ENCODE measurements at regions of chr18 and their contacts with region 1.

Region 1: GRCh38 chr18:71426441-71426840 is 1117.7 kb downstream of the CBLN2 start:
- DNase-seq: no peak
- ATAC-seq: no peak
- H3K4me3 ChIP-seq: no peak overlapping the region
- H3K27ac ChIP-seq: no peak overlapping the region
- H3K4me1 ChIP-seq: no peaks in the 10 kb centered on the region
- H3K27me3 ChIP-seq: no peaks in the 10 kb centered on the region
- CTCF ChIP-seq: no peak
- EP300 ChIP-seq: no peak
- POLR2A ChIP-seq: no peak
- RAD21 ChIP-seq: no peak

Region 2: DNA sequence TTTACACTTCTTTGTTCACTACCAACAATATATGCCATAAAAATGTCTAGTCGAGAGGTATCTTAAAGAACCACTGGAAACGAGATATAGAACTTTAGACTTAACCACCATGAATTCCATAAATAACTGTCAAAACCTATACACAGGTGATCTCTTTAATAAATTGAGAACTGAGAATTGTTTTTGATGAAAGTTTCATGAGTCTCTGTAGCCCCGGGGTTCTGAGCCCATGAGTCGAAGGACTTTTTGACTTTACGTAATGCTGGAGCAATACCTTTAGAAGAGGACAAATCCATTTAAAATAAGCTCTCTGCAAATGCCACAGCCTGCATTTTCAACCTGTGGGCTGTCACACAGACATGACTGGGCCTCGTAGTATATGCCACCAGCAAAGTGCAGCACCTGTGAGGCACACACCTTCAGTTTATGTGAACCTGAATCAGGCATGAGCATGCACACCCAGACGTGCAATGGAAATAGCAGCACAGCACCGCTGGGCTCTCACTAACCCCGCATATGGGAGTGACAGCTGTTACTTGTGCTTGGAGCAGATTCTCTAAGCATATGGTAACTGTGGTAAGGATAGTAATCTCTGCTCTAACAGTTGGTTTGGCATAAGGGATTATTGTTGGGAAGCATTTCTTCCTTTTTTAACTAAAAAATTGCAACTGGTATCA is 754.4 kb before region 1 on chr18:
- CTCF ChIA-PET with region 1: no interaction called
- POLR2A ChIA-PET with region 1: no interaction called
- in situ Hi-C with region 1: no loop called
- intact Hi-C with region 1: no loop called
- DNase-seq: no peak
- ATAC-seq: no peak
- H3K4me3 ChIP-seq: no peak overlapping the region
- H3K27ac ChIP-seq: no peak overlapping the region
- H3K4me1 ChIP-seq: no peaks in the 10 kb centered on the region
- H3K27me3 ChIP-seq: no peaks in the 10 kb centered on the region
- CTCF ChIP-seq: no peak
- EP300 ChIP-seq: no peak
- POLR2A ChIP-seq: no peak
- RAD21 ChIP-seq: no peak

Region 3: GRCh38 chr18:71388148-71388547 is 38.3 kb before region 1 on chr18:
- CTCF ChIA-PET with region 1: no interaction called
- POLR2A ChIA-PET with region 1: no interaction called
- in situ Hi-C with region 1: no loop called
- intact Hi-C with region 1: no loop called
- DNase-seq: no peak
- ATAC-seq: no peak
- H3K4me3 ChIP-seq: no peak overlapping the region
- H3K27ac ChIP-seq: no peak overlapping the region
- H3K4me1 ChIP-seq: no peaks in the 10 kb centered on the region
- H3K27me3 ChIP-seq: no peaks in the 10 kb centered on the region
- CTCF ChIP-seq: no peak
- EP300 ChIP-seq: no peak
- POLR2A ChIP-seq: no peak
- RAD21 ChIP-seq: no peak

Region 4: DNA sequence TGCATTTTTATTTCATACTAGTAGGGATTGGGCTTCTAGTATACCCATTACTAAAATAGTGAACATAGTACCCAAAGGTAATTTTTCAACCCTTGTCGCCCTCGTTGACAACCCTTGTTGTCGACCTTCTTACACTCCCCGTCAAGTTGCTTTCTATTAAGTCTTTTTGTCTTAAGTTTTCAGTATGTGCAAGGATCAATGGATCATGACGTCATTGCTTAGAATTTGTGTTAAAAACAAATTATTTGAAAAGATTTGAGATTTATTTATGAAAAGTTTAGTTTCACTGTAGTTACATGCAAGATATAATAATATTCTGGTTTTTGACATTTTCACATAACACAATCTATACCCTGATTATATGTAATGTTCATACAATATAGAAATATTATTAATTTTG is 1007.3 kb after region 1 on chr18:
- CTCF ChIA-PET with region 1: no interaction called
- POLR2A ChIA-PET with region 1: no interaction called
- in situ Hi-C with region 1: no loop called
- intact Hi-C with region 1: loop called (anchors 5 kb)
- DNase-seq: no peak
- ATAC-seq: no peak
- H3K4me3 ChIP-seq: no peak overlapping the region
- H3K27ac ChIP-seq: no peak overlapping the region
- H3K4me1 ChIP-seq: no peaks in the 10 kb centered on the region
- H3K27me3 ChIP-seq: no peaks in the 10 kb centered on the region
- CTCF ChIP-seq: no peak
- EP300 ChIP-seq: no peak
- POLR2A ChIP-seq: no peak
- RAD21 ChIP-seq: no peak

Measured in HepG2 (cell line).